ENCODE measurements at regions of chr12 and their contacts with region 1.

Region 1: DNA sequence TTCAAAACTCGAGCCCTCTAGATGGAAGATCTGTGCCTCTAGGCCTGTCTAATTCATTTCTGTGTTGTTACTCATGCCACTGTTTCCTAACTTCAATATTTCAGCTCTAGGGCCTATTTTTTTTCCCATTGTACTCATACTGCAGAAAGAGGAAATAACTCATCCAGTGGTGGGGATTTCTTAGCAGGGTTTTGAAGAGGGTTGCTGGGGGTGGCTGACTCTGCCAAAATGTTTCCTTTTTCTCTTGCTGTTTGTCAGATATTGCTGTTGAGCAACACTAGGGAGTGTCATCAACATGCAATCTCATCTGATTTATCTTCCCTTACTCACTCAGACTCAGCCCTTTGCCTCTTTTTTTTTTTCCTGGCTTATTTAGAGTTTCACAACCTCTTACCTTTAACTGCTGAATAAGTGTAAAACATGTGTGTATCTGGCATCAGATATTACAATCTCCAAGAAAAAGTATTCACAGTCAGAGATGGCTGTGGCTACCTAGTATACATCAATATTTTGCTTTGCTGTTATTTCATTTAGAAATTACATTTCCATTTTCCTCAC is 189.5 kb downstream of the DUSP6 start:
- DNase-seq: peak; percentile 79
- ATAC-seq: peak; percentile 94
- H3K4me3 Mint-ChIP-seq: no peak overlapping the region
- H3K27ac Mint-ChIP-seq: no peak overlapping the region
- H3K4me1 Mint-ChIP-seq: peaks cover 6% of the 10 kb centered on the region
- H3K27me3 Mint-ChIP-seq: no peaks in the 10 kb centered on the region
- CTCF ChIP-seq: no peak

Region 2: GRCh38 chr12:89073027-89073398 is 89.8 kb before region 1 on chr12:
- CTCF ChIA-PET with region 1: no interaction called
- POLR2A ChIA-PET with region 1: no interaction called
- intact Hi-C with region 1: no loop called
- DNase-seq: no peak
- ATAC-seq: peak; percentile 24
- H3K4me3 Mint-ChIP-seq: no peak overlapping the region
- H3K27ac Mint-ChIP-seq: no peak overlapping the region
- H3K4me1 Mint-ChIP-seq: peaks cover 9% of the 10 kb centered on the region
- H3K27me3 Mint-ChIP-seq: no peaks in the 10 kb centered on the region
- CTCF ChIP-seq: no peak

Region 3: GRCh38 chr12:89138048-89138852 is 24.5 kb before region 1 on chr12:
- CTCF ChIA-PET with region 1: interaction called, 4 read pairs
- POLR2A ChIA-PET with region 1: interaction called, 3 read pairs
- intact Hi-C with region 1: loop called (anchors 1 kb)
- DNase-seq: peak; percentile 54
- ATAC-seq: peak; percentile 91
- H3K4me3 Mint-ChIP-seq: no peak overlapping the region
- H3K27ac Mint-ChIP-seq: peak overlapping the region; percentile 75
- H3K4me1 Mint-ChIP-seq: peaks cover 30% of the 10 kb centered on the region
- H3K27me3 Mint-ChIP-seq: no peaks in the 10 kb centered on the region
- CTCF ChIP-seq: no peak

Region 4: DNA sequence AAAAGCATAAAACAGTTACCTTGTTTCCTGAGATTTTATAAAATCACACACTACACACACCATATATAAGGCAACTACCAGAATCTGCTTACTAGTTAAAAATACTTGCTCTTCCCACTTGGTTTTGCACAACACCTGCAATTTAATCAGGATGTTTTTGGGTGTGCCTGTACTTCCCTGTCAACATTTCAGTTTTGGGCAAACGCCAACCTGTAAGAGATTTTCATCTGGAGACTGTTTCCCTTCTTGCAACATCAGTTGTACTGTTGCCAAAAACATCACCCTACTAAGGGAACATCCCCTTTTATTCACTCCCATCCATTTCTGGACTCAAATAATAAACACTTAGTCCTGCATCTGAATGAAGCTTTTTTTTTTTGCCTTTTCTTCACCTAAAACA is 17.2 kb after region 1 on chr12:
- CTCF ChIA-PET with region 1: interaction called, 4 read pairs
- POLR2A ChIA-PET with region 1: no interaction called
- intact Hi-C with region 1: loop called (anchors 2 kb)
- DNase-seq: no peak
- ATAC-seq: no peak
- H3K4me3 Mint-ChIP-seq: no peak overlapping the region
- H3K27ac Mint-ChIP-seq: no peak overlapping the region
- H3K4me1 Mint-ChIP-seq: peaks cover 28% of the 10 kb centered on the region
- H3K27me3 Mint-ChIP-seq: peaks cover 6% of the 10 kb centered on the region
- CTCF ChIP-seq: no peak

Region 5: DNA sequence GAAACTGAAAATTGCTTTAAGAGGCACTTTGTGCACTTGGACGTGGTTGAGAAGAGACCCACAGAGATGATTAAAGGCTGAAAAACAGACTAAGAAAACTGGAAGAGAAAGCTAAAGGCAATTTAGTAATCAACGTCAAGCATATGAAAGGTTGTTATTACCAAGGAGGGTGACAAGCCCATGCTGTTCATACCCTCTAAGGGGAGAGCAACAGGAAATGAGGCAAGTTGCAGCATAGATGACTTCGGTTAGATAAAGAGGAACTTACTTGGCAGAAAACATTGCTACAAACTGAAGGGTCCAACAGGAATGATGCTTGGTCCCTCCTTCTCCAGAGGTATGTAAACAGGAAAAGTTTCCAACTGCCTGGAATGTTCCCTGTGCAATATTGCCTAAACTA is 81.8 kb after region 1 on chr12:
- CTCF ChIA-PET with region 1: no interaction called
- POLR2A ChIA-PET with region 1: no interaction called
- intact Hi-C with region 1: loop called (anchors 5 kb)
- DNase-seq: peak; percentile 45
- ATAC-seq: peak; percentile 86
- H3K4me3 Mint-ChIP-seq: peak overlapping the region; percentile 40
- H3K27ac Mint-ChIP-seq: peak overlapping the region; percentile 83
- H3K4me1 Mint-ChIP-seq: peaks cover 34% of the 10 kb centered on the region
- H3K27me3 Mint-ChIP-seq: peaks cover 3% of the 10 kb centered on the region
- CTCF ChIP-seq: no peak

Region 6: GRCh38 chr12:89352492-89353187 is 189.9 kb after region 1 on chr12 and contains the start of gene DUSP6:
- CTCF ChIA-PET with region 1: interaction called, 3 read pairs
- POLR2A ChIA-PET with region 1: interaction called, 3 read pairs
- intact Hi-C with region 1: loop called (anchors 2 kb)
- DNase-seq: peak; percentile 95
- ATAC-seq: peak; percentile 83
- H3K4me3 Mint-ChIP-seq: peak within 1 kb of the TSS; percentile 94
- H3K27ac Mint-ChIP-seq: peak within 1 kb of the TSS; percentile 93
- H3K4me1 Mint-ChIP-seq: peaks cover 35% of the 10 kb centered on the region
- H3K27me3 Mint-ChIP-seq: peaks cover 16% of the 10 kb centered on the region
- CTCF ChIP-seq: no peak
- total RNA-seq, gene DUSP6: 15.3 to 16.6 TPM

Region 7: DNA sequence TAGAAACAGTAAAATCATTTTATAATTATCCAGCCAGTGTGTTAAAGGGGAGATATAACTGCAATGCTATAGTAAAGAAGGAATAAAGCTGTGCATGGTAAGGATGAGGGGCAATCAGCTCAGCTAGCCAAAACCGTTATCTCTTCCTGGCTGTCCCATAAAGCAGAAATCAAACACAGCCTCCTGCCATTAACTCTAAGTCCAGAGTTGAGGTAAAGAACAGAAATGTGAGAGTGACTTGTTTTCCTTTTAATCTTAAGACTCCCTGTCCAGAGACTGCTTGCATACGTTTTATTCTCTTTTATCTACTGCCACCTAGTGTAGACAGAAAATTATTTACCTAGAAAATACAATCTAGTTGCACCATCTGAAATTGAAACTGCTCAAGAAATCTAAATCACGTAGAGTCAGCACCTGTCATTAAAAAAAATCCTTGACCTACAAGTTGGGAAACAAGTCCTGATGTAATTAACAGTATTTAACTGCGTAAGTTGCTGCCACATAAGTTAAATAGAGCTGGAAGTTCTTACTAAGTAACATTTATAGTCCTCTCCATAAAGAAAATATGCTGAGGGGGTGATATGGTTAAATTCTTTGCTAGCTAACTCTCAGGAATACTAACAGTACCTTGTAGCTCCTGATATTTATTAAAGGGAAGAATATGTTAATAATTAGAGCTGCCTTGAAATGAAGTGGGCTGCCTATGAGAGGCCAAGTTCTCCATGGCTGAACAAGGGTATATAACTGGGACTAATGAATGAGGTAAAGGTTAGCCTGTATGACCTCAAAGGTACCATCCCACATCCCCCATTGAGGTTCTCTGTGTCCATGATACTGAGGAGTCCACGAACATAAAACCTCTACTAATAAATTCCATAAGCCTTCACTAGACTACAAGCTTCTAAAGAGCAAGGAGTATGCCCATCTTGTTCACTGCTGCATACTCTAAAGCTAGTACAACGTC is 299.1 kb after region 1 on chr12:
- CTCF ChIA-PET with region 1: interaction called, 4 read pairs
- POLR2A ChIA-PET with region 1: no interaction called
- intact Hi-C with region 1: loop called (anchors 10 kb)
- DNase-seq: no peak
- ATAC-seq: peak; percentile 91
- H3K4me3 Mint-ChIP-seq: peak overlapping the region; percentile 46
- H3K27ac Mint-ChIP-seq: peak overlapping the region; percentile 79
- H3K4me1 Mint-ChIP-seq: peaks cover 32% of the 10 kb centered on the region
- H3K27me3 Mint-ChIP-seq: no peaks in the 10 kb centered on the region
- CTCF ChIP-seq: peak; percentile 76